ENCODE measurements at regions of chr17 and their contacts with region 1.

Region 1: DNA sequence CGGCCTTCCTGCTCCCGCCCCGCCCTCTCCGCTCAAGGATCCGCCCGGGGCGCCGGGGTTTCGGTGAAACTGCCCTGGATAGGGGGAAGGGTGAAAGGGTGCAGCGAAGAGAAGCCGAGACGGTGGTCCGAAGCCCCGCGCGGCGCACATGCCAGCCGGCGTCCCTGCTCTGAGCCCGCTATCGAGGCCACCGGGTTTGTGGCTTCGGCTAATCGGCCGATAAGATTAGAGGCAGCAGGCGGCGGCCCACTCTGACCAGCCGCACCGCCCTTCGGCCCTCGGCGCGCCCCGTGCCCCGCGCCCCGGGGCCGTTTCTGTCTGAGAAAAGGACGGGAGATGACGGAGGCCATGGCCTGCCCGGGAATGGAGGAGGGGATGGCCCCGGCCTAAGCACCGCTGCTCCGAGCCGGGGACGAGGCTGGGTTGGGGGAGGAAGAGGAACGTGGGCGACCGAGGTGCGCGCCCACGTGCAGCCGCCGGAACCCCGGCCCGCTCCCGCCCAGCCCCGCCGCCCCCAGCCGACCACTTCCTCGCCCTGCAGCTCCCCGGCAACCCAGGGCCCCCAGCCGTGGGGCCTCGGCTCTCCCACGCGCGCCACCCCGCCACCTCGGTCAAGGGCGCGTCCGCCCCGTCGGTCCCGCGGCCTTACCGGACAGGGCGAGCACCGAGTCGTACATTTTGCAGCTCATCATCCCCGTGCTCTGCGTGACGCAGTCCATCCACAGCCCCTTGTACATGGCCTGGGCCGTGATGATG is 928 bp downstream of the CLDN7 start:
- DNase-seq: peak; percentile 74 to 91
- H3K4me3 ChIP-seq: peak overlapping the region; percentile 97
- H3K27ac ChIP-seq: peak overlapping the region; percentile 100
- H3K4me1 ChIP-seq: peaks cover 40% of the 10 kb centered on the region
- H3K27me3 ChIP-seq: no peaks in the 10 kb centered on the region
- CTCF ChIP-seq: no peak; the same call in 1 of the 2 replicates

Region 2: DNA sequence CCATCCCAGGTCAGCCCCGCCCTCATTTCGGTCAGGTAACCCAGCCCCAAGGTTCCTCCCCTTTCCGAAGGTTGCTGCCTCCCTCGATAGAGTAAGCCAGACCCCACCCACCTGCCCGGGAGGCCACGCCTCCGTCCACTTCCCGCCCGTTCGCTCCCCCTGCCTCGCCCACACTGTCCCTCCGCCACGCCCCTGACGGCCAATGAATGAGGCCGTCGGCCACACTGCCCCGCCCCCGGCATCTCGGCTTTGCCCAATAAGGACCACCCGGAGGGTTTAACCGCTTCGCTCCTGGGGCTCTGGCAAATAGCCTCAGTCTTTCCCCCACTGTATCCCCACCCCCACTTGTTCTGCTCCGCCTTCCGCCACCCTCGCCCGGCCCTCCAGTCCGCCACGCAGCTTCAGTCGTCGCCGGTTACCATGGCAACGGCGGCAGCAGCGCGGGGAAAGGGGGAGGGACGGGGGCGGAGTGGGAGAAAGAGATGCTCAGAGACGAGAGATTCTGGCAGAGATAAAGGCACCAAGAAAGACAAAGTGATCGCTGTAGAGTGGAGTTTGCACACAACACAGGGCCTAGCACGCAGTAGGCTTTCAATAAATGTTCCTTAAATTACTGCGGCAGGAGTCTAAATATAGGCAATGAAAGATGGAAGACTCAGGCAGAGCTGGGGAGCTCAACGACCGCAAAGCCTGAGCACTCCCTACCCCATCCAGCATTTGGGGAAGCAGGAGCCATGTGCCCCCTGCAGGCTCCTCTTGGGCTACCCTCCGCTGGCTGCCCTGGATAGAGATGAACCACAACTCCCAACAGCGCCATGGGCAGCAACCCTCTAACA is 46.8 kb before region 1 on chr17:
- CTCF ChIA-PET with region 1: no interaction called
- POLR2A ChIA-PET with region 1: no interaction called
- intact Hi-C with region 1: loop called (anchors 1 kb)
- DNase-seq: peak; percentile 90 to 100
- H3K4me3 ChIP-seq: peak overlapping the region; percentile 52
- H3K27ac ChIP-seq: no peak overlapping the region
- H3K4me1 ChIP-seq: peaks cover 20% of the 10 kb centered on the region
- H3K27me3 ChIP-seq: no peaks in the 10 kb centered on the region
- CTCF ChIP-seq: peak; percentile 68

Region 3: DNA sequence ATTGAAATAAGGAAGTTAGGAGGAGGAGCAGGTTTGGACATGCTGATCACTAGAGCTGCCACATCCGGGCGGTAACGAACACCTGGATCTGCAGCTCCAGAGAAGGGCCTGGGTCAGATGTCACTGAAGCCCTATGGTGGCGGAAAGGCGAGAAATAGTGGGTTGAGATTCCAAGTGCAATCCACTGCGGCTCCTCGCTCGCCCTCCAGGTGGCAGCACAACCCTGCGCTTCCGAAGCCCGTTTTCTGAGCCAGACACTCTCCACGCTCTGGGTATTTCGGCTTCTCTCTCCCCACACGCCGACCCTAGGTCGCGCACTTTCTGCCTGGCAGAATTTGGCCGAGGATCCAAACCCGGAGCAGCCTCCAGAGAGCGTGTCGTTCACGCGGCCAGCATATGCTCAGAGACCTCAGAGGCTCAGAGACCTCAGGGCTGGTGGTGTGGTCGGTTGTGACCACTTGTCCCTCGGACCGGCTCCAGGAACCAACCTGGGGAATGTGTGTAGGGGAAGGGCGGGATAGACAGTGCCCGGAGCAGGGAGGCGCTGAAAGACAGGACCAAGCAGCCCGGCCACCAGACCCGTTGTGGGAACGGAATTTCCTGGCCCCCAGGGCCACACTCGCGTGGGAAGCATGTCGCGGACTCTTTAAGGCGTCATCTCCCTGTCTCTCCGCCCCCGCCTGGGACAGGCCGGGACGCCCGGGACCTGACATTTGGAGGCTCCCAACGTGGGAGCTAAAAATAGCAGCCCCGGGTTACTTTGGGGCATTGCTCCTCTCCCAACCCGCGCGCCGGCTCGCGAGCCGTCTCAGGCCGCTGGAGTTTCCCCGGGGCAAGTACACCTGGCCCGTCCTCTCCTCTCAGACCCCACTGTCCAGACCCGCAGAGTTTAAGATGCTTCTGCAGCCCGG is 19.4 kb after region 1 on chr17:
- CTCF ChIA-PET with region 1: interaction called, 5 read pairs
- POLR2A ChIA-PET with region 1: interaction called, 5 read pairs
- intact Hi-C with region 1: loop called (anchors 1 kb)
- DNase-seq: peak; percentile 74 to 91
- H3K4me3 ChIP-seq: peak overlapping the region; percentile 55
- H3K27ac ChIP-seq: peak overlapping the region; percentile 62
- H3K4me1 ChIP-seq: 0 out of 2 replicates have a peak, but pooled peaks cover 4% of the 10 kb centered on the region
- H3K27me3 ChIP-seq: no peaks in the 10 kb centered on the region
- CTCF ChIP-seq: peak; percentile 96

Region 4: GRCh38 chr17:7351665-7352501 is 90.5 kb after region 1 on chr17 and contains the start of gene KCTD11:
- CTCF ChIA-PET with region 1: no interaction called
- POLR2A ChIA-PET with region 1: no interaction called
- intact Hi-C with region 1: loop called (anchors 1 kb)
- DNase-seq: peak; percentile 92 to 99
- H3K4me3 ChIP-seq: peak within 1 kb of the TSS; percentile 86
- H3K27ac ChIP-seq: peak within 1 kb of the TSS; percentile 98
- H3K4me1 ChIP-seq: peaks cover 28% of the 10 kb centered on the region
- H3K27me3 ChIP-seq: no peaks in the 10 kb centered on the region
- CTCF ChIP-seq: no peak; the same call in 1 of the 2 replicates
- total RNA-seq, gene KCTD11: 16.4 and 18.3 TPM in 2 replicates

Region 5: GRCh38 chr17:7572588-7573323 is 311.4 kb after region 1 on chr17:
- CTCF ChIA-PET with region 1: interaction called, 3 read pairs
- POLR2A ChIA-PET with region 1: interaction called, 33 read pairs
- intact Hi-C with region 1: no loop called
- DNase-seq: peak; percentile 96 to 100
- H3K4me3 ChIP-seq: peak overlapping the region; percentile 91
- H3K27ac ChIP-seq: peak overlapping the region; percentile 90
- H3K4me1 ChIP-seq: peaks cover 33% of the 10 kb centered on the region
- H3K27me3 ChIP-seq: no peaks in the 10 kb centered on the region
- CTCF ChIP-seq: no peak